Left ventricle myocardium superior (tissue), 1 donor: ENCODE measurements at regions of chr1 and their contacts with region 1.

Region 1: GRCh38 chr1:39258146-39258924 is 53.8 kb downstream of the MACF1 start:
- DNase-seq: peak; percentile 66
- ATAC-seq: peak; percentile 84

Region 2: DNA sequence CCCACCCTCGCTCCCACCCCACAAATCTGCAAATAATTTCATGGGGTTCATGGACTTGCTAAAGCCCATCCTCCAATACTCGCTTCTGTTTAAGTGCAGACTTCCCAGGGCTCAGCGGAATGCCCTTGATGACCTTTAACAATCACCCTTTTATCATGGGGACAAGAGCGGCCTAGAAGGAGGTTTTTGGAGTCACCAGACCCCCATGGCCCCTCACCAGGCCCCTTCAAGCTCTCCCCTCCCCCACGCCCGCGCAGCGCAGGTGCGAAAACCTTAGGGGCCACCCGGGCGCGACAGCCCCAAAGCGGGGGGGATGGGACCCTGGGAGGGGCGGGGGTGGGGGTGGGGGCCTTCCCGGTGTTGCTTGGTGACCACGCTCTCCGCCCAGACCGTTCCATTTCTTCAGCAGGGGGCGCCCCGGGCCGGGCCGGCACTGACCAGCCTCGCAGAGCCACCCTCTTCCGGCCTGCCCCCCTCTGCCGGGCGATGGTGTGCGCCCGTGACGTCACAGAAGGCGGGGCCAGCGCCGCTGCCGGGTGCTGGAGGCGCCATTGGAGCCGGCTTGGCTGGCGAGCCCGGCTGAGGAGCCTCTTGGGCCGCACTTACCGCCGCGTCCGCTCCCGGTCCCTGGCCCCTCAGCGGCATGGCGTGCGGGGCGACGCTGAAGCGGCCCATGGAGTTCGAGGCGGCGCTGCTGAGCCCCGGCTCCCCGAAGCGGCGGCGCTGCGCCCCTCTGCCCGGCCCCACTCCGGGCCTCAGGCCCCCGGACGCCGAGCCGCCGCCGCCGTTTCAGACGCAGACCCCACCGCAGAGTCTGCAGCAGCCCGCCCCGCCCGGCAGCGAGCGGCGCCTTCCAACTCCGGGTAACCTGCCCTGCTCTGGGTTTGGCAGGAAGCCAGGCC is 267.3 kb before region 1 on chr1 and contains the start of gene AKIRIN1:
- intact Hi-C with region 1: no loop called
- DNase-seq: peak; percentile 99
- ATAC-seq: peak; percentile 97
- total RNA-seq, gene AKIRIN1: 66.4 TPM

Region 3: GRCh38 chr1:39178541-39179431 is 79.5 kb before region 1 on chr1:
- intact Hi-C with region 1: no loop called
- DNase-seq: no peak
- ATAC-seq: peak; percentile 28

Region 4: DNA sequence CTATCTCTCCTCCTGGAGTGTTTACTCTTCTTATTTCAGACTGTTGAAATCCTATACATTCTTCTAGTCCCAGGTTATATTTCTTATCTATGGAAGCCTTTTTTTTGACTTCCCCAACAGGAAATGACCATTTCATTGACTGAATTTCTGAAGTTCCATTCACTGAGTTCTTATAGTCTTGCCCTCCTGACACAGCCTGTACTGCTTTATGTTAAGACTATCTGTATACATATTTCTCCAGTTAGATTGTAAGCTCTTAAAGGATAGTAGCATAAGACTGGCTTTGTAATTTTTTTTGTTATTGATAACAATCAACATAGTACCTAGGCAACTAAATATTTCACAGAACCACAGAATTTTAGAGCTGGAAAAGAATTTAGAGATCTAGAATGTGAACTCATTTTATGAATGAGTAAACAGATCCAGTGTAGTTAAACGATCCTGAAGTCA is 68.7 kb before region 1 on chr1:
- intact Hi-C with region 1: loop called (anchors 5 kb)
- DNase-seq: no peak
- ATAC-seq: no peak

Region 5: DNA sequence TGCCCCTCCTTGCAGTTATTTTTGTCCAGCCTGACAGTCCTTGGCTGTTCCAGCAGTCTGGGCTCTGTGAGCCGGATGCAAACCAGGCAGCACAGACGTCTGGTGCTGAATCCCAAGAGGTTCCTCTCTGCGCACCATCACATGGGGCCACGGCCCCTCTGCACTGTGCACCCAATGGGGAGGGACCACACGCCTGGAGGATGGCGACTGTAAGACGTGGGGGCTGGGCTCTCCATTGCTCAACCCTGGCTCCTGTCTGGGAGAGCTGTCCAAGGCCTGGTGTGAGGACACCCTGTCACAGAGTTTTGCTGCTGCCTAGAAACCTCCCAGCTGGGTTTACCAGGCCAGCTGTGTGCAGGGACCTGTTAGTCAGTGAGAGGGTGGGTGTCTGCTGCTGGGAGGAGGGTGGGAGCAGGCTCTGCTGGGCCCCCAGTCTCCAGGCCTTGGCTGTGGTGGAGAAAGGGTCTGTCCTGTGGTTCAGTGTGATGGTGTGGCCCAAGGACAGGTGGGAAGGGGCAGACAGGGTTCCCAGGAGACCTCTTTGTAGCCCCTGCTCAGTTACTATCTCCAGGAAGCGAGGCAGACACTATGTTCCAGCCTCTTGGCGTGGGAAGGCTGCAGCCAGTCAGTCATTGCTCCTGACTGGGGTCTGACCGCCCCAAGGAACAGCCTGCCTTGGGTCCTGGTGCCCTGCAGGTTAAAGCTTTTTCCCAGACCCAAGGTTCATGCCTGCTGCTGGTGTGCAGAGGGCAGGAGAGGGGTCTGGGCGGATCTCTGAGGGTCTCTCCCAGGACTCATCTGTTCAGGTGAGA is 367.3 kb after region 1 on chr1:
- intact Hi-C with region 1: no loop called
- DNase-seq: peak; percentile 91
- ATAC-seq: peak; percentile 89

Region 6: GRCh38 chr1:39755965-39756659 is 497.8 kb after region 1 on chr1:
- intact Hi-C with region 1: no loop called
- DNase-seq: no peak
- ATAC-seq: no peak